BJ (cell line): ENCODE measurements at regions of chr1 and their contacts with region 1.

Region 1: DNA sequence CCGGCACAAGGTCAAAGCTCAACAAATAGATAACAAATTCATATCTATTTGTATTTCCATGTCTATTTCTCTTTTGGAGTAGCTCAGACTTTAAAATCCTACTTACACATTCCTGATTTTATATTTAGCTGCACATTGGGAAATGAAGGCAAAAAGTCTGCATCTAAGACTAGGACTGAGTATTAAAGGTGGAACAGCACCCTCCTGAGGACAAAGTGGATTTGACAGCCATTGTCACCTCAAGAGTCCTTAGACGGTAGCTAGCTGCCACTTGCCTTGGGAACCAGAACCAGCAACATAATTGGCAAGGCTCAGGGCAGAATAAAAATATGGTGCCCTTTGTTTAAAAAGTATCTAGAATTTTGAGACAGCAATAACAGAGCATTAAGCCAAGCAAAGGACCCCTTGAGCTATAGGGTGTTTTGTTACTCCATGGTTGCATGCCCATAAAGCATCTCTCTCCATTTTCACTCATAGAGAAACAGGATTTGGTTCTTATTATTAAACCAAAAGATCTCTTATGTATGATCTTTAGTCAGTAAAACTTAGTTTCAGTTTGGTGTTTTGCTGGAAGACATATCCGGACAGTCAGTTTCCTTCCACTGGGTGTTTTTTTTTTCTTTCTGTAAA is 30.0 kb upstream of the SGIP1 start:
- DNase-seq: no peak
- H3K4me3 ChIP-seq: no peak overlapping the region
- H3K27me3 ChIP-seq: no peaks in the 10 kb centered on the region
- CTCF ChIP-seq: peak; percentile 67

Region 2: DNA sequence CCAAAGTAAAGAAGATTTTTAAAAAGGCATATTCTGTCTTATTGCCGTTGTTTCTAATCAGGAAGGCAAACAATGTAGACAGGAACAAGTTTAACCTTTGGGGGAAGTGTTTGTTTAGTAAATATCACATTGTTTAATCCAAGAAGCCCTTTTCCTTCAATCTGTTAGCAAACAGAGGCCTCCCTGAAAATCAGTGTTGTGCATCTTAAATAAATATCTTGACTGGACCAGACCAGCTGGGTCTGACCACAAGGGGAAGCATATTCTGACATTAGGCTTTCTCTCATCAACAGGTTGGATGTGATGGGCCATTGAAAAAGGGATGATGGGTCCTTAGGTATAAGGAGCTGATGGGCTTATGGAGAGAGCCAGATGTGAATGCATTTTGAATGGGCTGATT is 51.8 kb before region 1 on chr1:
- CTCF ChIA-PET with region 1: interaction called, 41 read pairs
- POLR2A ChIA-PET with region 1: no interaction called
- DNase-seq: no peak
- H3K4me3 ChIP-seq: no peak overlapping the region
- H3K27me3 ChIP-seq: no peaks in the 10 kb centered on the region
- CTCF ChIP-seq: no peak

Region 3: GRCh38 chr1:66518654-66519053 is 14.7 kb after region 1 on chr1:
- CTCF ChIA-PET with region 1: interaction called, 16 read pairs
- POLR2A ChIA-PET with region 1: no interaction called
- DNase-seq: no peak
- H3K4me3 ChIP-seq: no peak overlapping the region
- H3K27me3 ChIP-seq: no peaks in the 10 kb centered on the region
- CTCF ChIP-seq: no peak

Region 4: DNA sequence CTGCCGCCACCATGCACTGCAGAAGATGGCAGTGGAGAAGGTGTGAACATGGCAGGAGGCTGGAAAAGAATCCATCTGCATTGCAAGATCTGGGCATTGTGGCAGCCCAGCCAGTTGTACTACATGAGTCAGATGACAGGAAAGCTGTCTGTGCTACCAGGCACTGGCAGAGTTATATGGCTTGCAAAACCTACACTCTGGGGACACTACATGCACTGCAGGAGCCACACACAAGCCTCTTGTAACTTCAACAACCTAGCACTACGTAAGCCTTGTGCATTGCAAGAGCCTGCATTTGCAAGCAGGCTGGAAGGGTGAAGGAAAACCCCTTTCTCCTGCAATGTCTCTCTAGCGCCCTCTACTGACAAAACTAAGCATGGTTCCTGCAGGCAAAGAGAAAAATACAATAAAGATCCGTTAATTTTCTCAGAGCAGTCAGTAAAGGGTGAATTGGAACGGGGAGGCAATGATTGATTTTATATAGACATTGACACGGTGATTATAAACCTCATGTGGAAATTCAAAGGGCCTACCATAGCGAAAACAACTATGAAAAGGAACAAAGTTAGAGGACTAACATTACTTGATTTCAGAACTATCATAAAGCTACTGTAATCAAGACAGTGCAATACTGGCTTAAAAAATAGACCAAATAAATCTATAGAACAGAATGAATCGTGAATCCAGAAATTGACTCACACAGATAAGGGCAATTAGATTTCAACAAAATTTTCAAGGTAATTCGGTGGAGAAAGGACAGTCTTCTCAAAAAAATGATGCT is 222.1 kb after region 1 on chr1:
- CTCF ChIA-PET with region 1: interaction called, 12 read pairs
- POLR2A ChIA-PET with region 1: no interaction called
- DNase-seq: no peak
- H3K4me3 ChIP-seq: no peak overlapping the region
- H3K27me3 ChIP-seq: no peaks in the 10 kb centered on the region
- CTCF ChIP-seq: peak; percentile 99